Activated CD4-positive, alpha-beta T cell treated with anti-CD3 and anti-CD28 coated beads for 36 hours (primary cell): ENCODE measurements at regions of chr3 and their contacts with region 1.

Region 1: GRCh38 chr3:186953011-186953487 is 22.7 kb downstream of the ST6GAL1 start:
- DNase-seq: no peak
- ATAC-seq: peak; percentile 90
- H3K4me3 Mint-ChIP-seq: peak overlapping the region; percentile 10
- H3K27ac Mint-ChIP-seq: peak overlapping the region; percentile 81
- H3K4me1 Mint-ChIP-seq: peaks cover 73% of the 10 kb centered on the region
- H3K27me3 Mint-ChIP-seq: no peaks in the 10 kb centered on the region

Region 2: GRCh38 chr3:186705882-186706780 is 246.9 kb before region 1 on chr3:
- CTCF ChIA-PET with region 1: no interaction called
- POLR2A ChIA-PET with region 1: no interaction called
- intact Hi-C with region 1: no loop called
- DNase-seq: peak; percentile 74
- ATAC-seq: peak; percentile 98
- H3K4me3 Mint-ChIP-seq: no peak overlapping the region
- H3K27ac Mint-ChIP-seq: no peak overlapping the region
- H3K4me1 Mint-ChIP-seq: peaks cover 12% of the 10 kb centered on the region
- H3K27me3 Mint-ChIP-seq: peaks cover 35% of the 10 kb centered on the region

Region 3: GRCh38 chr3:186985661-186986364 is 32.8 kb after region 1 on chr3:
- CTCF ChIA-PET with region 1: no interaction called
- POLR2A ChIA-PET with region 1: interaction called, 3 read pairs
- intact Hi-C with region 1: loop called in 1 of 2 experiments (anchors 5 kb)
- DNase-seq: no peak
- ATAC-seq: no peak
- H3K4me3 Mint-ChIP-seq: no peak overlapping the region
- H3K27ac Mint-ChIP-seq: no peak overlapping the region
- H3K4me1 Mint-ChIP-seq: peaks cover 31% of the 10 kb centered on the region
- H3K27me3 Mint-ChIP-seq: no peaks in the 10 kb centered on the region

Region 4: DNA sequence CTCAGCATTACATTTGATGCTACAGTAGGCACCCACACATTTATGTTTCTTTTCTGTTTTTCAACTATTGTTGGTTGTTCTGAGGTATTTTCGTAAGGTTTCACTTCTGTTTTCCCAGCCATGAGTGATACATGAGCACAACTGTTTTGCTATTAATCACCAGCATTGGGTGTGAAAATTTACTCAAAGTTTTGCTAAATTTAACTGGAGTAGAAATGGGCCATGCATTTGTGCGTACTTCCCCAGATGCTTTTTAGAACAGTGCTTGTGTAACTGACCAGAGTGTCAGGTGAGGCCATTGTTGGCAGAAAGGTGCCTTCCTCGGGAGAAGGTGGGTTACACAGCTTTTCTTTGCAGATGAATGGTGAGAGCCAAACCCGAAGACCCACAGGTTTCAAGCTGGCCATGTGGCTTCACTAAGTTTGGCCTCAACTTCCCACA is 47.7 kb after region 1 on chr3:
- CTCF ChIA-PET with region 1: no interaction called
- POLR2A ChIA-PET with region 1: no interaction called
- intact Hi-C with region 1: loop called (anchors 2 to 5 kb)
- DNase-seq: peak; percentile 54
- ATAC-seq: peak; percentile 92
- H3K4me3 Mint-ChIP-seq: peak overlapping the region; percentile 27
- H3K27ac Mint-ChIP-seq: peak overlapping the region; percentile 89
- H3K4me1 Mint-ChIP-seq: peaks cover 66% of the 10 kb centered on the region
- H3K27me3 Mint-ChIP-seq: no peaks in the 10 kb centered on the region

Region 5: DNA sequence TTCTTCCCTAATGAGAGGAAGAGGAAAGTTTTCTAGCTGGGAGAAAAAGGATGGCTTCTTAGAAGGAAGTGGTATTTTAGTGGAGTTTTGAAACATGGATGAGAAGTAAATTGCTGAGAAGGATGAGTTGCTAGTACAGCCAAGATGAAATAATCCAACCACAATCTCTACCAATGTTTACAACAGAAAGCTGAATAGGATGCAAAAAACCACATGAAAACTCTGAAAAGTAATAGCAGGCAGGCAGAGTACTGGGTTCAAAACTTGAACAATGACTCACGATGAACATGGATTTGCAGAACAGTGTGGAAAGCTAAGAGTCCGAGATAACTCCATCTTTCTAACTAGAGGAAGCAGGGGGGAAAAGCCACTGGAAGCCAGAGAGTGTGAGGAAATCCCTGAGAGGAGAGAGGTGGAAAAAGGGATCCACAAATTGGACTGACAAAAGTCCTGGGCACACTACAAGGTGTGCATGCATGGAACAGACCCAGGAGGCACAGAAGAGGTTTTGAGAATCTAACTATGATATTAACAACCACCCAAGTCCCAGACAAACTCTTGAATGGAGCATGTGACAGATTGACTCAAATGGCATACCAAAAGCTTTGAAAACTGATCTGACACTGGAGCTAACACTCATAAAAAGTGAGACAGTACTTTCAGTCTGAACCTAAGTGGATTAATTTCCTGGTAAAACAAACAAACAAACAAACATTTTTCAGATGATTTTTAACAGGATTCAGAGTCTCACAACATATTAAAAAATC is 54.0 kb after region 1 on chr3:
- CTCF ChIA-PET with region 1: no interaction called
- POLR2A ChIA-PET with region 1: no interaction called
- intact Hi-C with region 1: loop called in 1 of 2 experiments (anchors 5 kb)
- DNase-seq: no peak
- ATAC-seq: peak; percentile 81
- H3K4me3 Mint-ChIP-seq: no peak overlapping the region
- H3K27ac Mint-ChIP-seq: peak overlapping the region; percentile 67
- H3K4me1 Mint-ChIP-seq: peaks cover 55% of the 10 kb centered on the region
- H3K27me3 Mint-ChIP-seq: no peaks in the 10 kb centered on the region

Region 6: GRCh38 chr3:188309437-188310269 is 1356.6 kb after region 1 on chr3:
- CTCF ChIA-PET with region 1: no interaction called
- POLR2A ChIA-PET with region 1: no interaction called
- intact Hi-C with region 1: no loop called
- DNase-seq: peak; percentile 50
- ATAC-seq: peak; percentile 85
- H3K4me3 Mint-ChIP-seq: peak overlapping the region; percentile 9
- H3K27ac Mint-ChIP-seq: peak overlapping the region; percentile 80
- H3K4me1 Mint-ChIP-seq: peaks cover 26% of the 10 kb centered on the region
- H3K27me3 Mint-ChIP-seq: no peaks in the 10 kb centered on the region